ENCODE measurements at regions of chr3 and their contacts with region 1.

Region 1: GRCh38 chr3:156443079-156443478 is 111.8 kb downstream of the SSR3 start:
- DNase-seq: no peak
- H3K4me3 ChIP-seq: no peak overlapping the region
- H3K27ac ChIP-seq: no peak overlapping the region
- H3K4me1 ChIP-seq: peaks cover 0 to 4% (median 0%) of the 10 kb centered on the region in 4 experiments; a peak in 1 of 7 replicates
- H3K27me3 ChIP-seq: no peaks in the 10 kb centered on the region
- CTCF ChIP-seq: no peak
- EP300 ChIP-seq: no peak
- POLR2A ChIP-seq: no peak
- RAD21 ChIP-seq: no peak

Region 2: DNA sequence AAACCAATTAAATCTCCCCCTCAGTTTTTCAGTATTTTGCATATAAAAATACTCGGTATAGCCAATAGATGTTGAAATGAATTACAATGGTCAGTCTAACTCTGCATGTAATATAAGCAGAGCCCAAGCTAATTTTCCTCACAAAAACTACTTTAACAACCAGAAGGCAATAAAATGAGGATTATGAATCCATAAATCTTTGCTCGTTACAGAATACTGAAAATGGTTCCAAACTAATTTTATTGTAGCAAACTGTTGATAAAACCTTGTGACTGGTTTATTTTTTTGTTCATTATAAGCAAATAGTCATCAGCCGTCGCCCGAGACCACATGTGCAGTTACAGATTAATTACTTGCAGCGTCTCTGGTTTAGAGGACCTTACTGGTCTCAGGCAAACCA is 71.4 kb before region 1 on chr3:
- CTCF ChIA-PET with region 1: no interaction called
- POLR2A ChIA-PET with region 1: no interaction called
- DNase-seq: no peak
- H3K4me3 ChIP-seq: no peak overlapping the region
- H3K27ac ChIP-seq: no peak overlapping the region
- H3K4me1 ChIP-seq: peaks cover 5 to 13% (median 12%) of the 10 kb centered on the region in 4 experiments; a peak in 6 of 7 replicates
- H3K27me3 ChIP-seq: no peaks in the 10 kb centered on the region
- CTCF ChIP-seq: no peak
- EP300 ChIP-seq: no peak
- POLR2A ChIP-seq: no peak
- RAD21 ChIP-seq: no peak

Region 3: GRCh38 chr3:156424758-156425157 is 18.3 kb before region 1 on chr3:
- CTCF ChIA-PET with region 1: interaction called, 20 read pairs
- POLR2A ChIA-PET with region 1: no interaction called
- DNase-seq: no peak
- H3K4me3 ChIP-seq: no peak overlapping the region
- H3K27ac ChIP-seq: no peak overlapping the region
- H3K4me1 ChIP-seq: no peaks in the 10 kb centered on the region
- H3K27me3 ChIP-seq: no peaks in the 10 kb centered on the region
- CTCF ChIP-seq: no peak
- EP300 ChIP-seq: no peak
- POLR2A ChIP-seq: no peak
- RAD21 ChIP-seq: no peak

Region 4: GRCh38 chr3:156795890-156796481 is 352.9 kb after region 1 on chr3:
- CTCF ChIA-PET with region 1: no interaction called
- POLR2A ChIA-PET with region 1: no interaction called
- DNase-seq: no peak
- H3K4me3 ChIP-seq: no peak overlapping the region
- H3K27ac ChIP-seq: no peak overlapping the region
- H3K4me1 ChIP-seq: no peaks in the 10 kb centered on the region
- H3K27me3 ChIP-seq: no peaks in the 10 kb centered on the region
- CTCF ChIP-seq: no peak
- EP300 ChIP-seq: no peak
- POLR2A ChIP-seq: no peak
- RAD21 ChIP-seq: no peak

Region 5: DNA sequence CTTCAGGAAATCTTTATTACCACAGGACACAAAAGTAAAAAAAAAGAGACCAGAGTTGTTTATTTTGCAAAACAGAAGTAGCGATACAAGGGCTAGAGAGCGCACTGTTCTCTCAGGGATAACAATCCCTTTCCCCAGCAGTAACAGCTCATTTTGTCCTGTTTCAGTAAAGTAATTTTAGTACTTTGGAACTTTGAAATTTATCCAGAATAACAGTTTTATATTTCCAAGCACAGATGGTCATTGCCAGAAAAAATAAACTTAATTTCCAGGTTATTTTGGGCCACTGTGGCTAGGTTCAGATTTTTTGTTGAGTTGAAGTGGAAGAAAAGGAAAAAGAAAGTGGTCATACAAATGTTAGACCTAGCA is 400.3 kb after region 1 on chr3:
- CTCF ChIA-PET with region 1: no interaction called
- POLR2A ChIA-PET with region 1: no interaction called
- DNase-seq: no peak
- H3K4me3 ChIP-seq: no peak overlapping the region
- H3K27ac ChIP-seq: no peak overlapping the region
- H3K4me1 ChIP-seq: no peaks in the 10 kb centered on the region
- H3K27me3 ChIP-seq: no peaks in the 10 kb centered on the region
- CTCF ChIP-seq: no peak
- EP300 ChIP-seq: no peak
- POLR2A ChIP-seq: no peak
- RAD21 ChIP-seq: no peak

Measured in H1 (cell line).